ENCODE measurements at regions of chr12 and their contacts with region 1.

Region 1: DNA sequence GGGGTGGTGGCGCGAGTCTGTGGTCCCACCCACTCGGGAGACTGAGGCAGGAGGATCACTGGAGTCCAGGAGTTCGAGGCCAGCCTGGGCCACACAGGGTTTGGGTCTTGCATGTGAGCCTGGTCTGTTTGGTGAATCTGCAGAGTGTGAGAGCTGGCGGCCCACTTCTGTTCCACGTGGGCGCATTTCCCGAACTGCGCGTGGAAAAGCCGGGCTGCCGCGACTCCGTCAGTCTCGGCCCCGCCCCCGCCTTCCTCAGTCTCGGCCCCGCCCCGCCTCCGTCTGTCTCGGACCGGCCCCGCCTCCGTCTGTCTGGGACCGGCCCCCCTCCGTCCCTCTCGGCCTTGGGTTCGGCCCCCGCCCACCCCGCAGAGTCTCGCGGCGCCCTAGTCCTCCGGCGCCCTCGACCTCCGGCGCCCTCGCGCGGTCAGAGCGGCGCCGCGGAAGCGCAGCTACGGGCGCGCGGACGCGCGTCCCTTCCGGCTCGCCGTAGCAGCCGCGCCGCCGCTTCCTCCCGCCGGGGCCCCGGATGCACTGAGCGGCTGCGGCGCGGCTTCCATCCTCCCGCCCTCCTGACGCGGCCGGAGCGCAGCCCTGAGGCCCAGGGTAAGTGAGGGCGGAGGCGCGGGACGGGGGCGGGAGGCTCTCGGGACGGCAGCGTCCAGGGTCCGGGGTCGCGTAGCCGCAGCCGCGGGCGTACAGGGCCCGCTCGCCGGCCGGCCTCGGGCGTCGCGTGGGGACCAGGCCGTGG is at the start of gene EP400:
- DNase-seq: peak; percentile 96
- H3K4me3 ChIP-seq: peak within 1 kb of the TSS; percentile 42 to 85
- H3K27ac ChIP-seq: peak within 1 kb of the TSS; percentile 34 to 84
- H3K4me1 ChIP-seq: peaks cover 5 to 7% of the 10 kb centered on the region in 2 donors
- H3K27me3 ChIP-seq: no peaks in the 10 kb centered on the region
- CTCF ChIP-seq: peak; percentile 33 to 89 (median 80)
- POLR2A ChIP-seq: peak; percentile 17 to 56
- total RNA-seq, gene EP400: 11.8 to 70.6 (median 28.2) TPM

Region 2: DNA sequence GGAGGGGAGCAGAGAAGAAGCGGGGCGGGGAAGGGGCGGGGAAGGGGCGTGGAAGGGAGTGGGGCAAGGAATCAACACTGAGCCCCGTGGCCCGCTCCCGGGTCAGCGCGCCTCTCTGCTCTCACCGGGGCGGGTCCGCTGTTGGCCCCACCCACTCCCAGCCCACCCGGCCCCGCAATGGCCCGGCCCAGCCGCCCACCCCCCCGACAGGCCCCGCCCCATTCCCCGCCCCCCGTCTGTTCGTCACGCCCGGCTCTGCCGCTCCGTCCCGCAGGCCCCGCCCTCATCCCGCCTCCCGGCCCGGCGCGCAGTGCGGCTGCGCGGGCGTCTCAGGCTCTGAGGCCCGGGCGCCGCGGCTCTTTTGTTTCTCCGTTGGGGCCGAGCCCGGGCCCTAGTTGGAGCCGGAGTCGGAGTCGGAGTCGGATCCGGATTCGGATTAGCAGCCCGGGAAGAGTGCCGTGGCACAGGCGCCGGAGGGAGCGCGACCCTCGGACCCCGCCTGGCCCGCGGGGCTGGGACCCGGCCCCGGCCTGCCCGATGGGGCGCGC is 55.2 kb before region 1 on chr12 and contains the start of gene ULK1:
- intact Hi-C with region 1: loop called (anchors 2 kb)
- DNase-seq: peak; percentile 94 to 96
- H3K4me3 ChIP-seq: peak within 1 kb of the TSS; percentile 60 to 86
- H3K27ac ChIP-seq: peak within 1 kb of the TSS; percentile 96 to 97
- H3K4me1 ChIP-seq: peaks cover 0 to 7% of the 10 kb centered on the region in 2 donors
- H3K27me3 ChIP-seq: no peaks in the 10 kb centered on the region
- CTCF ChIP-seq: no peak
- POLR2A ChIP-seq: peak; percentile 95 to 96
- total RNA-seq, gene ULK1: 11.8 to 135 (median 38.8) TPM